Activated CD4-positive, alpha-beta memory T cell treated with anti-CD3 and anti-CD28 coated beads for 36 hours (primary cell): ENCODE measurements at regions of chr13 and their contacts with region 1.

Region 1: DNA sequence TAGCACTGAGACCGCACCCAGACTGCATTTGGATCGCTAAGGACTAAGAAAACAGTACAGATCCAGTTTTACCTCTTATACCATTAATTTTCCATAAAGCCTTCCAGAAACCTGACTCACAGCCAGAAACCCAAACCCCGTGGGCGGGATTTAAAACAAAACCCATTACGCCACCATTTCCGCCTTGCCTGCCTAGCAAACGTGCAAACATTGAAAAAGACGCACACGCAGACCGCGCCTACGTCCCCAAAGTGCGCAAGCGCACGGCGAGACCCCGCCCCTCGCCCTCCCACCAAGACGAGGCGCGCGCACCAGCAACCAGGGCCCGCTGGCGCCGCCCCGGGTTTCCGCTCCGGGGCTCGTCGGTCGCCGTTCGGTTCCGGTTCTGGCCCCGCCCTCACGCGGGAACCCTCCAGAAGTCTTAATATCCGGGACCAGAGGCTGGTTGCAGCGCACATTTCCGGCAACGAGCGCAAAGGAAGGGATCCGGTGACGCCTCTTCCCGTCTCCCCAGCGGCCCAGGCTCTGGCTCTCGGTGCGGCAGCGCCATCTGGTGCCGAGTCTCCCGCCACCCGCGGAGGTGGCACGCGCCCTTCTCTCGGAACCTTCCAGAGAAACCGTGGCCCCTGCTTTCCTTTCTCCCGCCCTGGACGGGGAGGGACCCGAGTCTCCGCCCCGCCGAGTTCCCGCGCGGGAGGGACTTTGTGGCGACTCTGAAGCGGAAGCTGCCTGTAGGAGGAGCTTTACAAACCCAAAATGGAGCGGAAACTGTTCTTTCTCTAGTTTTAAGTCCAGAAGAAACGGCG is 256.9 kb upstream of the STARD13 start:
- DNase-seq: peak; percentile 99
- H3K4me3 Mint-ChIP-seq: peak overlapping the region; percentile 83
- H3K27ac Mint-ChIP-seq: peak overlapping the region; percentile 100
- H3K4me1 Mint-ChIP-seq: peaks cover 51% of the 10 kb centered on the region
- H3K27me3 Mint-ChIP-seq: no peaks in the 10 kb centered on the region

Region 2: DNA sequence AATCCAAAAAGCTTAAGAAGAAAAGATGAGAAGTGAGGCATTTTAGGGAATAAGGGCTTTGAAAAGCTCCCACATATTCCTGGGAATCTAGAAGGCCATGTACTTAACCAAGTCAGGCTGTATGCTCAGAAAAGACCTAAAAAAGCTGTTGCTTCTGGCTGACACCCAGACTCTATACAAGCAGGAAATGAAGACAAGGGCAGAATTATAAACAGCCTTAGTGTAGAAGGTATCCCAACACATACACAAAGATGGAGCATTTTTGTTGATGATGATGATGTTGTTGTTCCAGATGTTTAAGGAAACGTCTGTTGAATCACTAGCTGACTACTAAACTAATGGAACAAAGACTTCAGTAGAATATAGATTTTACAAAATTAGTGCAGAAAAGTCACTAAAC is 1088.5 kb before region 1 on chr13:
- CTCF ChIA-PET with region 1: no interaction called
- POLR2A ChIA-PET with region 1: no interaction called
- intact Hi-C with region 1: loop called (anchors 10 kb)
- DNase-seq: no peak
- H3K4me3 Mint-ChIP-seq: no peak overlapping the region
- H3K27ac Mint-ChIP-seq: no peak overlapping the region
- H3K4me1 Mint-ChIP-seq: peaks cover 4% of the 10 kb centered on the region
- H3K27me3 Mint-ChIP-seq: no peaks in the 10 kb centered on the region

Region 3: DNA sequence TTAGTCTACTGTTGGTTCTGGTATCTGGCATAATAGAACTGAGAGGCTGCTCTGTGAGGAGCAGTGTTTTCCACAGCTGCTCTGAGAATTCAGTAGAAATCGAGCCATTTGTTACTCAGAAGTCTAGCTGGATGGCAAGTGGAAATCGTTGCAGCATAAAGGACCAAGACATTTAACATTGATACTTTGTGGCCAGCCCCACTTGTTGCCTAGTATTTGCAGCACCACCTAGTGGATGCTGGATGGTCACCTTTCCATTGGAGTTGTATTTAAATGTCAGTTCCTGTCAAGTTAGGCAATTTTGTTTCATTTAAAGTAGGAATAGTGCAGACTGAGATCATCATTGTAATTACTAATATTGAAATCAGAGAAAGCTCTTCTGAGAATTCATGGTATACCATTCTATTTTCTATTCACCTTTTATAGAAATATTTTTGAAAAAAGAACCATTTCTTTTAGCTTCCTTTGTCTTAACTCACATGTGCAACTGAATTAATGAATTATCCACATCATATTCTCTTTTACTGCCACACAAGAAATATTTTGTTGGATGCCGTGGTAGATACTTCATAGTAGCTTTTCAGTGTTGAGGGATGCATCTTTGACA is 891.7 kb before region 1 on chr13:
- CTCF ChIA-PET with region 1: interaction called, 3 read pairs
- POLR2A ChIA-PET with region 1: no interaction called
- intact Hi-C with region 1: loop called (anchors 2 kb)
- DNase-seq: peak; percentile 78
- H3K4me3 Mint-ChIP-seq: no peak overlapping the region
- H3K27ac Mint-ChIP-seq: no peak overlapping the region
- H3K4me1 Mint-ChIP-seq: peaks cover 46% of the 10 kb centered on the region
- H3K27me3 Mint-ChIP-seq: no peaks in the 10 kb centered on the region

Region 4: DNA sequence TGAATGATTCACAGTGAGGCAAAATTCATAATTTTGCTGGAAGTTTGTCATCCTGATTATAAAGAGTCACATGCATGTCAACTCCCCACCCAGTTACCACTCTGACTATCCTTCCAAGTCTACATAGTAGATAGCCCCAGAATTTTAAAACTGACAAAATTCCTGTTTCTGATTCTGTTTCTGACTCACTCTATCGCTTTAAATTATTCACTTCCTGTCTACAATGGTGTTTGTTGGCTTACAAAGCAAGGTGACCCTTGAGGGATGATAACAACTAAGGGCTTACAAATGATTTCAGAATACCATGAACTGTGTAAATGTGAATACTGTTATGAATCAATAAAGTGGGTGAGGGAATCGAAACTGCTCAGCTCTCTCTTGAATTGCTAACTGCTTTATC is 625.0 kb before region 1 on chr13:
- CTCF ChIA-PET with region 1: no interaction called
- POLR2A ChIA-PET with region 1: no interaction called
- intact Hi-C with region 1: loop called (anchors 1 kb)
- DNase-seq: peak; percentile 13
- H3K4me3 Mint-ChIP-seq: no peak overlapping the region
- H3K27ac Mint-ChIP-seq: no peak overlapping the region
- H3K4me1 Mint-ChIP-seq: peaks cover 13% of the 10 kb centered on the region
- H3K27me3 Mint-ChIP-seq: peaks cover 8% of the 10 kb centered on the region

Region 5: DNA sequence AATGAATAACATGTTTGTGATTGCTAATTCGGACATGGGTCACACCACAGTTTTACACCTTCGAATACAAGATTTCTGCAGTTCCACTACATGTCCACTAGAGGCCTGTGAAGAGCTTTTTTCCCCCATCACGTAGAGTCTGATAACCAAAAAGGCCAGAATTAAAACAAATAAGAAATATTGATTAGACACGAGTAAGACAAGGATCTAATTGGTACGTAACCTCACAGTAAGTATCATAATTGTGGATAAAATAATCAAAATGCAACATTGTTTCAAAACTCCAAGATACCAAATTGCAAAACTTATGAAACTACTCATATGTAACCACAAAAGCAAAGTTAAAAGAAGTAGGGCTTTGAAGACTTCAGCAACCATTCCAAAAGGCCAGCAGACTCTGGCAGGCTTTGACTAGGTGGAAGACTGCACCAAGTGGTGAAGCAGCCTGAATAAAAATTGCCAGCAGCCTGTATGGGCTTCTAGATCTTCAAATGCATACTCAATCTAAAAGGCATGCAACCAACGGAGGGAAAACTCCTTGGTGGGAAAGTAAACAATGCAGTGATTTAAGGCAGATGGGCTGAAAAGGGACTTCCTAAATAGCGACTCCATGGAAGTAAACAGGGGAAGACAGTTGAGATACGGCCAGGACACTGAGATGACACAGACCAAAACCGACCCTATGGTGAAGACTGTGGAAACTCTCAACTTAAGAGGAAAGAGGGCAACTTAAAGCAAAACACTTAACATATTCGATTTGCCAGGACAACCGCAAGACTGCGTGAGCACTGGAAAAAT is 313.6 kb before region 1 on chr13:
- CTCF ChIA-PET with region 1: interaction called, 14 read pairs
- POLR2A ChIA-PET with region 1: no interaction called
- intact Hi-C with region 1: loop called (anchors 1 kb)
- DNase-seq: no peak
- H3K4me3 Mint-ChIP-seq: no peak overlapping the region
- H3K27ac Mint-ChIP-seq: no peak overlapping the region
- H3K4me1 Mint-ChIP-seq: peaks cover 10% of the 10 kb centered on the region
- H3K27me3 Mint-ChIP-seq: peaks cover 5% of the 10 kb centered on the region

Region 6: DNA sequence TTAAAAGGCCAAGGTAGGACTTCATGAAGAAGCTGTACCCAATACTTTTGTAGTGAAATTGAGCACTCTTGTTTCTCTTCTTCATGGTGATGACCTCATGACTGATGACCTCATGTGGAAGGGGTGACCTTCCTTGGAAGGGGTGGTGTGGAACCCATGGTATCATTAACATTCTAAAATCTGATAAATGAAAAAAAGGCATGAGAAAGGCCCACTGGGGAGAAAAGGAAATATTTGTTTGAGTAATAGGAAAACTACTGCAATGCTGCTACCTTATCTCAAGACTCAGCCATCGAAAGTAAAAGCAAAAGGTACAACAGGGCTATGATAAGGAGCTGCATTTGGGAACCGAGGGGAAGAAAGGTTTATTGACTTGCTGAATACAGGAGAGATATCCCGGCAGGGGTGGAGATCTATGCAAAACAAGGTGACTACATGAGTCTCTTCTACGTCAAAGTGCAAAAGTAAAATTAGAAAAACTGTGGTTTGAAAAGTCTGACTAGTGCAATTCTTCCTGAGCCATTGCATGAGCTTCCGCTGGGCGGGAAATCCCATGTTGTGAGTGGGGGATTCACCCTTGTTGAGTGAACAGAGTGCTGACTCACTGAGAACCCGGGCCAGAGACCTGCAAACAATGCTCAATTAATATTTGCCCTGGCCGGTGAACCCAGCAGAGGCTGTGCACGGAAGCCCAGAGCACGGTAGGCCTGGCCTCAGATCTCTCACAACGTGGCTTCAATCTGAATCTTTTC is 136.6 kb after region 1 on chr13:
- CTCF ChIA-PET with region 1: interaction called, 23 read pairs
- POLR2A ChIA-PET with region 1: interaction called, 15 read pairs
- intact Hi-C with region 1: loop called (anchors 1 kb)
- DNase-seq: peak; percentile 93
- H3K4me3 Mint-ChIP-seq: peak overlapping the region; percentile 81
- H3K27ac Mint-ChIP-seq: peak overlapping the region; percentile 98
- H3K4me1 Mint-ChIP-seq: peaks cover 46% of the 10 kb centered on the region
- H3K27me3 Mint-ChIP-seq: no peaks in the 10 kb centered on the region

Region 7: DNA sequence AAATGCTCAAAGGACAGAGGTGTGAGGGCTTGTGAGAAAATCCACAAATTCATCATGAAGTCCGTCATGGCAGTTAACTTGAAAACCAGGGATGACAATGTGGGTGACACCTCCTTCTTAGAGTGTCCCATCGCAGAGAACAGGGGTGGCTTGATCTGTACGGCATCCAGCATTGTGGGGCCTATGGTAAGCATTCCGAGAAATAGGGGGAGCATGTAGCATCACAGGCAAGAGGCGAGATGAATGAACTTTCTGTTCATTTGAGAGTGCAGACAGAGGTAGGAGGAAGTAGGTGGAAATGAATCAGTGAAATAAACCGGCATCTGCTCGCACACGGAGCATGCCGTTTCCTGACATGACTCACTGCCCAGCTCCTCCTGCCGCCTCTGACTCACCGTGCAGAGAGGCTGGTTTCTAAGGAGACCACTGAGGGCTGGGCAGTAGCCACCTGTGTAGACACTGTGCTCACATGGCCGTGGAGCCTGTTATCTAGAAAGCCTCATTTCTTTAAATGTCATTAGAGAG is 614.4 kb after region 1 on chr13:
- CTCF ChIA-PET with region 1: no interaction called
- POLR2A ChIA-PET with region 1: no interaction called
- intact Hi-C with region 1: loop called (anchors 2 kb)
- DNase-seq: peak; percentile 74
- H3K4me3 Mint-ChIP-seq: peak overlapping the region; percentile 28
- H3K27ac Mint-ChIP-seq: peak overlapping the region; percentile 10
- H3K4me1 Mint-ChIP-seq: peaks cover 14% of the 10 kb centered on the region
- H3K27me3 Mint-ChIP-seq: peaks cover 10% of the 10 kb centered on the region